Activated CD4-positive, alpha-beta T cell treated with anti-CD3 and anti-CD28 coated beads for 36 hours (primary cell): ENCODE measurements at regions of chr9 and their contacts with region 1.

Region 1: GRCh38 chr9:97982683-97983588 is at the start of gene ANP32B:
- DNase-seq: peak; percentile 98
- ATAC-seq: peak; percentile 89
- H3K4me3 Mint-ChIP-seq: peak within 1 kb of the TSS; percentile 81
- H3K27ac Mint-ChIP-seq: peak within 1 kb of the TSS; percentile 92
- H3K4me1 Mint-ChIP-seq: peaks cover 49% of the 10 kb centered on the region
- H3K27me3 Mint-ChIP-seq: no peaks in the 10 kb centered on the region
- total RNA-seq, gene ANP32B: 367 to 440 TPM

Region 2: DNA sequence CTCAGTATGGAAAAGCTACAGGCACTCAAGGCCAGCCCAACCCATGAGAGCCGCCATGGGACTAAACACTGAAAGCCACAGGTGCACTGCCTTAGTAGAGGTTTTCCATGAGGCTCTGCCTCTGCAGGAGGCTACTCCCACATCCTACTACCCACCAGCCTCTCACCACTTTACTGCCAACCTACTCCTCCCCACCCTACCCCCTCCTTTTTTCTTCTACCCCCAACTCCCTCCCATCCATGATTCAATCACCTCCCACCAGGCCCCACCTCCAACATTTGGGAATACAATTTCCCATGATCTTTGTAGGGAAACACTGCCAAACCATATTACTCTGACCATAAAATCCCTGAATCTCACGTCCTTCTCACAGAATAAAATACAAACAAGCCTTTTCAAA is 842.4 kb before region 1 on chr9:
- CTCF ChIA-PET with region 1: no interaction called
- POLR2A ChIA-PET with region 1: no interaction called
- intact Hi-C with region 1: no loop called
- DNase-seq: no peak
- ATAC-seq: no peak
- H3K4me3 Mint-ChIP-seq: no peak overlapping the region
- H3K27ac Mint-ChIP-seq: no peak overlapping the region
- H3K4me1 Mint-ChIP-seq: no peaks in the 10 kb centered on the region
- H3K27me3 Mint-ChIP-seq: no peaks in the 10 kb centered on the region

Region 3: GRCh38 chr9:97803167-97804058 is 179.5 kb before region 1 on chr9:
- CTCF ChIA-PET with region 1: no interaction called
- POLR2A ChIA-PET with region 1: no interaction called
- intact Hi-C with region 1: loop called in 1 of 2 experiments (anchors 2 kb)
- DNase-seq: peak; percentile 86
- ATAC-seq: peak; percentile 90
- H3K4me3 Mint-ChIP-seq: peak overlapping the region; percentile 72
- H3K27ac Mint-ChIP-seq: peak overlapping the region; percentile 67
- H3K4me1 Mint-ChIP-seq: peaks cover 10% of the 10 kb centered on the region
- H3K27me3 Mint-ChIP-seq: peaks cover 21% of the 10 kb centered on the region

Region 4: GRCh38 chr9:98034593-98035546 is 51.9 kb after region 1 on chr9:
- CTCF ChIA-PET with region 1: interaction called, 3 read pairs
- POLR2A ChIA-PET with region 1: no interaction called
- intact Hi-C with region 1: loop called in 1 of 2 experiments (anchors 5 kb)
- DNase-seq: peak; percentile 96
- ATAC-seq: peak; percentile 99
- H3K4me3 Mint-ChIP-seq: no peak overlapping the region
- H3K27ac Mint-ChIP-seq: peak overlapping the region; percentile 21
- H3K4me1 Mint-ChIP-seq: peaks cover 14% of the 10 kb centered on the region
- H3K27me3 Mint-ChIP-seq: no peaks in the 10 kb centered on the region

Region 5: GRCh38 chr9:98074115-98074990 is 91.4 kb after region 1 on chr9:
- CTCF ChIA-PET with region 1: no interaction called
- POLR2A ChIA-PET with region 1: no interaction called
- intact Hi-C with region 1: loop called in 1 of 2 experiments (anchors 1 kb)
- DNase-seq: peak; percentile 81
- ATAC-seq: no peak
- H3K4me3 Mint-ChIP-seq: no peak overlapping the region
- H3K27ac Mint-ChIP-seq: peak overlapping the region; percentile 90
- H3K4me1 Mint-ChIP-seq: peaks cover 34% of the 10 kb centered on the region
- H3K27me3 Mint-ChIP-seq: no peaks in the 10 kb centered on the region

Region 6: DNA sequence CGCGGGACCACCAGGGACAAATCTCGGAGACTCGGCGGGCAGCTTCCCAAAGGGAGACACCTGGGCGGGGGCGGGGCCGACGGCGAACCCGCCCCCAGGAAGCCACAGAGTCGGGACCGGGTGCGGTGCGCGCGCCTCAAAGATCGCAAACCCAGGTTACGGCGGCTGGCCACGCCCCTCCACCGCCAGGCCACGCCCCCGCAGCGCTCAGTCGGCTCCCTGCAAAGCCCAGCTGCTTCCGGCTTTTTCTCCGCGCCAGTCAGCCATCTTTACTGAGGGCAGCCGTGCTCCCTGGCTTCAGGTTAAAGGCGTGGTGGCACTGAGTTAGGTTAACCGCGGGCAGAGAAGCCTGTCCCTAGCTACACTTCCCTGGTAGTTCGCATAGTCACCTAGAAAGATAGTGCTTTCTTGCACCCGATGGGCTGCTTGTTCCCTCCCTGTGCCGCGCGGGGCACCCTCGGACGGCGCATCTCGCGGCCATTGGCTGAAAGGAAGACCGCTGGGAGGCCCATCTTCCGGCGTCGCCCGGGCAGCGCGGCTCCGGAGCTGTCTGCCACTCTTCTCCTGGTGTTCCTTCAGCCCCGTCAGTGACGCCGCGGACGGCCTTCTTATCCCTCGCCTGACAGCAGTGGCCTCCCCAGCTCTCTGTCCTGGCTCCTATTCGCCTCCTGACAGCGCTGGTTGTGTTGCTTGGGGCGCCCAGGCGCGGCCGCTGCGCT is 272.8 kb after region 1 on chr9 and contains the start of gene TBC1D2:
- CTCF ChIA-PET with region 1: interaction called, 3 read pairs
- POLR2A ChIA-PET with region 1: no interaction called
- intact Hi-C with region 1: loop called in 1 of 2 experiments (anchors 1 kb)
- DNase-seq: peak; percentile 99
- ATAC-seq: peak; percentile 87
- H3K4me3 Mint-ChIP-seq: peak within 1 kb of the TSS; percentile 94
- H3K27ac Mint-ChIP-seq: peak within 1 kb of the TSS; percentile 98
- H3K4me1 Mint-ChIP-seq: peaks cover 17% of the 10 kb centered on the region
- H3K27me3 Mint-ChIP-seq: no peaks in the 10 kb centered on the region
- total RNA-seq, gene TBC1D2: 2.8 to 3.2 TPM